Mammary epithelial cell (primary cell): ENCODE measurements at regions of chr12 and their contacts with region 1.

Region 1: GRCh38 chr12:4538207-4539160 is at the start of gene RAD51AP1:
- DNase-seq: peak; percentile 95
- H3K4me3 ChIP-seq: peak within 1 kb of the TSS; percentile 76 to 100 (median 99)
- H3K27ac ChIP-seq: peak within 1 kb of the TSS; percentile 99
- H3K4me1 ChIP-seq: peaks cover 14% of the 10 kb centered on the region
- H3K27me3 ChIP-seq: no peaks in the 10 kb centered on the region
- CTCF ChIP-seq: no peak
- total RNA-seq, gene RAD51AP1: 3.0 to 23.4 TPM

Region 2: GRCh38 chr12:4379405-4379804 is 159.1 kb before region 1 on chr12 and contains the start of gene FGF23:
- CTCF ChIA-PET with region 1: no interaction called
- dilution Hi-C with region 1: no loop called
- in situ Hi-C with region 1: no loop called
- intact Hi-C with region 1: no loop called
- DNase-seq: peak; percentile 17
- H3K4me3 ChIP-seq: no peak within 1 kb of the TSS
- H3K27ac ChIP-seq: no peak within 1 kb of the TSS
- H3K4me1 ChIP-seq: no peaks in the 10 kb centered on the region
- H3K27me3 ChIP-seq: peaks cover 2% of the 10 kb centered on the region
- CTCF ChIP-seq: no peak
- total RNA-seq, gene FGF23: not detected

Region 3: DNA sequence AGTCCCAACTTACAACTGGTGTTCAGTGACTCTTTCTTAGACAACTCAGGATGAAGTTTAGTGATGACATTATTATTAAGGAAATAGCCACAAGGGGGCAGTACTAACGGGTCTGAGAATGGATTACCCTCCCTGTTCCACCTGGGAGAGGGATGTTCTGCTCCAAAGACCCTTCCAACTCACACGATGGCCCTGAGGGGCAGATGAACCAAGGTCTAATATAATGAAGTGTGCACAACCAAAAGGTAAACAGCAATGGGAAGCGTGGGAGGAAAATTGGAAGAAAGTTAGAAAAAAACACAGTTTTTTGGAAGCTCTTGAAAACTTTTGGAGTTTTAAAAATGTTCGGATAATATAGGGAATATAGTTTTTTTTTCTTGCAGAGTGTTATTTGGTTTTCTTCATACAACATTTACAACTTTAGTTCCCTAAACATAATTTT is 116.9 kb before region 1 on chr12:
- CTCF ChIA-PET with region 1: no interaction called
- dilution Hi-C with region 1: no loop called
- in situ Hi-C with region 1: loop called in 1 of 2 experiments (anchors 10 kb)
- intact Hi-C with region 1: no loop called
- DNase-seq: peak; percentile 17
- H3K4me3 ChIP-seq: no peak overlapping the region
- H3K27ac ChIP-seq: no peak overlapping the region
- H3K4me1 ChIP-seq: no peaks in the 10 kb centered on the region
- H3K27me3 ChIP-seq: peaks cover 2% of the 10 kb centered on the region
- CTCF ChIP-seq: peak; percentile 47 to 63